ENCODE measurements at regions of chr11 and their contacts with region 1.

Region 1: DNA sequence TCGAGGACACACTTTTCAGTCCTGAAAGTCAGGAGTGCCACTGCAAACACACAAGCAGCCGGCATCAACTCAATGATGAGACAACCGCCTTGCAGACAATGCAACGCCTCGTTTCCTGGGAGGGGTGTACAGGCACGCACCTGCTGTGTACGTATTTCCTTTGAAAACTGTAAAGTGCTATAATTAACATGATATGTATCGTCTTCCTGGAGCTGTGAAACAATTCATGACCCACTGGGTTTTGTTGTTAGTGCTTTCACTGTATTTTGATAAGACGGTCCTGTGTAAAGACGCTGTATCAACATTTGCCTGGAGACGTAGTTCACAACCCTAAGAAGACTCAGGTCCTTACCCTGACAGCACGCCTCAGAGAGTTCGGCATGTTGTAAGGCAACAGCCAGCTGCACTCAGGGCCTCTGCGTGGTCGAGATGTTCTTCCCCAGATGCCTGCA is 105.7 kb upstream of the ANO1 start:
- DNase-seq: no peak
- H3K4me3 ChIP-seq: no peak overlapping the region
- CTCF ChIP-seq: no peak
- POLR2A ChIP-seq: no peak

Region 2: DNA sequence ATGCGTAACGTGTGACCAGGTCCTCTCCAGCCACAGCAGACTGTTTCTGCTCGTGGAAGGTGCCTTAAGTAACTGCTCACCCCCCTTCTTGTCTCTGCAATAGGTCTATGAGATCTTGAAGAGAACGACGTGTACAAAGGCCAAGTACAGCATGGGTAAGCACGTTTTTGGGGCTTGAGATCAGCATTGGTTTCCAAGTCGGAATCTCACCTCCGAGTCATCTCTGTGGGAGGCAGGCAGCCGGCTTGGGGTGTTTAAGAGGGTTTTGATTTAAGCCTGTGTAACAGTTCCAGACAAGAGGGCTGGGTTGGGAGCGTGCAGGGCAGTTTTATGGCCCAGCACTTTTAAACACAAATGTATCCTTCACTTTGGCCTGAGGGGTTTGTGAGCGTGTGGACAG is 135.9 kb after region 1 on chr11:
- intact Hi-C with region 1: no loop called
- DNase-seq: no peak
- H3K4me3 ChIP-seq: no peak overlapping the region
- CTCF ChIP-seq: no peak
- POLR2A ChIP-seq: no peak

Region 3: GRCh38 chr11:70610566-70611565 is 638.5 kb after region 1 on chr11:
- intact Hi-C with region 1: loop called (anchors 5 kb)
- DNase-seq: no peak
- H3K4me3 ChIP-seq: no peak overlapping the region
- CTCF ChIP-seq: no peak
- POLR2A ChIP-seq: no peak

Region 4: GRCh38 chr11:71103266-71103665 is 1130.9 kb after region 1 on chr11:
- intact Hi-C with region 1: loop called (anchors 10 kb)
- DNase-seq: peak in 1 of 2 donors; percentile 90
- H3K4me3 ChIP-seq: no peak overlapping the region
- CTCF ChIP-seq: no peak
- POLR2A ChIP-seq: no peak